Naive thymus-derived CD4-positive, alpha-beta T cell (primary cell): ENCODE measurements at regions of chr15 and their contacts with region 1.

Region 1: DNA sequence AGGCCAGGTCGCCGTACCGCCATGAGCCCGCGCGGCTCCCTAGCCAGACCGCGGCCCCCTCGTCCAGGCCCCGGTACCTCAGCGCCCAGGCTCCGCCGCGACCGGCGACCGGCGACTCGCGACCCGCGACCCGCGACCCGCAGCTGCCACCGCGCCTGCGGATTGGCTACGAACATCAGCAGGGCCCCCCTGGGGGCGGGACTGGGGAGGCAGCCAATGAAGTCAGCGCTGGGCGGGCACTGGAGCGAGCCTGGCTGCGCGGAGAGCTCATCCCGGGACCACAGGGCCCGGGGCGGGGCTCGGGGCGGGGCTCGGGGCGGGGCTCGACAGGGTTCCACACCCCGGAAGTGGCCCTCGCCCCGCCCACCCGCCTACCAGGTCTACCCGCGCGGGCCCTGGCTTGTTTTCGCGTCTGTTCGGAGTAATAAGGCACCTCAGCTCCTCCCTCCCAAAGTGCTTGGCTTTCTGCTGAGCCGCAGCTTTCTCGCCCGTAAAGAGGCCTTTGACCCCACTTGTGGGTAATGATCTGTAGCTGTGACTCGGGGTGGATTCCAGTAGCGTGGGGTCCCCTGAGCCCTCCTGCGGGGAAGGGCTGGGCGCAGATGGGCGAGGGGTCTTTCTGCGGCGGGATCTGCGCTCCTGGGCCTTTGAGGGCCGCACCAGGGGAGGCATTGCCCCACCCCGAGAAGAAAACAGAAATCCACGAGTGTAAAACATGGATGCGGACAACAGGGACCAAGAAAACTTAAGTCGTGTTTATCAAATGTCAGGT is at the start of gene LYSMD4:
- DNase-seq: peak; percentile 93 to 98 (median 96)
- ATAC-seq: peak; percentile 100
- H3K4me3 ChIP-seq: peak within 1 kb of the TSS; percentile 70
- H3K4me3 Mint-ChIP-seq: peak within 1 kb of the TSS; percentile 81 to 92 (median 88)
- H3K27ac ChIP-seq: peak within 1 kb of the TSS; percentile 84
- H3K27ac Mint-ChIP-seq: peak within 1 kb of the TSS; percentile 82 to 97 (median 95)
- H3K4me1 ChIP-seq: peaks cover 10 to 13% of the 10 kb centered on the region in 2 donors
- H3K4me1 Mint-ChIP-seq: peaks cover 5 to 36% (median 27%) of the 10 kb centered on the region in 7 donors
- H3K27me3 ChIP-seq: no peaks in the 10 kb centered on the region
- H3K27me3 Mint-ChIP-seq: no peaks in the 10 kb centered on the region
- total RNA-seq, gene LYSMD4: 7.9 to 22.4 (median 15.4) TPM

Region 2: DNA sequence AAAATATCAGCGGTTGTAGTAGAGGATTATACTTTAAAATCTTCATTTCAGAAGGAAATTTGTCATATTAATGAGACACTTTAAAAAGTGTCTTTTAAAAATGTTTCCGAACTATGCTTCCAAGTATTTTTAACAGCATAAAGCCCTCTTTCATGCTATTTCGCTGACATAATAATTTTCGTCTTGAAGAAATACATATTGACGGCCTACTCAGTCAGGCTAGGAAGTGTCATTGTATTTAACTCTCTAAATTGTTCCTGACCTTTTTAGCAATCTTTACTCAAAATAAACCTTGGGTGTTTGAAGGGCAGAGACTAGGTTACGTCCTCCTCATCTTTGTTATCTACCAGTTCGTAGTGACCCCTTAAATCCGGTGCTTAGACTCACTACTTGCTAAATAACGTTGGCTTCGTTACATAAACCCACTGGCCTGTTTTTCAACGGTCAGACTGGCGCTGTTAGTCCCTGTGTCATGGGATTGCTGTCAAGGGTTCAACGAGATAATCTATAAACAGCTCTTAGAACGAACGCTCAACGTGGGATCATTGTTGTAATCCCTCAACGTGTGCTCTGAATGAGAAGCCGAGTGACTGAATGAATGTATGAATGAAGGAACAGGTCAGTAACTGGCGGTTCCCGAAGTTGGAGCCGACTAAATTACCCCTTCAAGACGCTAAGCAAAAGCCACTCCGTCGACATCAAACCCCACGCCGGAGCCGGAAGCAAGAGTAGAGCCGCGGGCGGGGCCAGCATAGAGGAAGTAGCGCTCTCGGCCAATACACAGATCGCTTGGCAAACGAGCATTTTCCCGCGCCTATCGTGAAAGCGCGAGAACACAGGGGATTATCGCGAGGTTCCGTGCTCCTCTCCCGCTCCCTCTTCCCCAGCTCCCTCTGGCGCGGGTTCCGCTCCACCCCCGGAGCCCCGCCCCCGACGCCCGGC is 482.7 kb before region 1 on chr15:
- CTCF ChIA-PET with region 1: no interaction called
- POLR2A ChIA-PET with region 1: interaction called, 5 read pairs
- intact Hi-C with region 1: loop called (anchors 1 kb)
- DNase-seq: peak; percentile 78 to 95 (median 92)
- ATAC-seq: peak; percentile 96
- H3K4me3 ChIP-seq: peak overlapping the region; percentile 76
- H3K4me3 Mint-ChIP-seq: peak overlapping the region in 8 of 10 donors; percentile 81 to 95 (median 92)
- H3K27ac ChIP-seq: peak overlapping the region; percentile 65
- H3K27ac Mint-ChIP-seq: peak overlapping the region; percentile 83 to 92 (median 90)
- H3K4me1 ChIP-seq: peaks cover 14 to 28% of the 10 kb centered on the region in 2 donors
- H3K4me1 Mint-ChIP-seq: peaks cover 24 to 32% (median 27%) of the 10 kb centered on the region in 7 donors
- H3K27me3 ChIP-seq: no peaks in the 10 kb centered on the region
- H3K27me3 Mint-ChIP-seq: no peaks in the 10 kb centered on the region

Region 3: GRCh38 chr15:99282121-99282520 is 451.3 kb before region 1 on chr15:
- CTCF ChIA-PET with region 1: interaction called, 8 read pairs
- POLR2A ChIA-PET with region 1: interaction called, 5 read pairs
- intact Hi-C with region 1: loop called in 1 of 2 experiments (anchors 1 kb)
- DNase-seq: no peak
- ATAC-seq: no peak
- H3K4me3 ChIP-seq: no peak overlapping the region
- H3K4me3 Mint-ChIP-seq: no peak overlapping the region
- H3K27ac ChIP-seq: no peak overlapping the region
- H3K27ac Mint-ChIP-seq: no peak overlapping the region
- H3K4me1 ChIP-seq: no peaks in the 10 kb centered on the region
- H3K4me1 Mint-ChIP-seq: peaks cover 9 to 47% (median 19%) of the 10 kb centered on the region in 7 donors
- H3K27me3 ChIP-seq: no peaks in the 10 kb centered on the region
- H3K27me3 Mint-ChIP-seq: no peaks in the 10 kb centered on the region

Region 4: GRCh38 chr15:99409097-99409473 is 324.4 kb before region 1 on chr15:
- CTCF ChIA-PET with region 1: no interaction called
- POLR2A ChIA-PET with region 1: no interaction called
- intact Hi-C with region 1: loop called in 1 of 2 experiments (anchors 1 kb)
- DNase-seq: peak in 6 of 9 donors; percentile 24 to 57 (median 42)
- ATAC-seq: peak; percentile 71
- H3K4me3 ChIP-seq: no peak overlapping the region
- H3K4me3 Mint-ChIP-seq: peak overlapping the region in 3 of 10 donors; percentile 27 to 66 (median 28)
- H3K27ac ChIP-seq: no peak overlapping the region
- H3K27ac Mint-ChIP-seq: peak overlapping the region in 7 of 9 donors; percentile 18 to 91 (median 32)
- H3K4me1 ChIP-seq: peaks cover 0 to 17% of the 10 kb centered on the region in 2 donors
- H3K4me1 Mint-ChIP-seq: peaks cover 0 to 28% (median 22%) of the 10 kb centered on the region in 7 donors
- H3K27me3 ChIP-seq: no peaks in the 10 kb centered on the region
- H3K27me3 Mint-ChIP-seq: peaks cover 0 to 3% (median 0%) of the 10 kb centered on the region in 5 donors

Region 5: DNA sequence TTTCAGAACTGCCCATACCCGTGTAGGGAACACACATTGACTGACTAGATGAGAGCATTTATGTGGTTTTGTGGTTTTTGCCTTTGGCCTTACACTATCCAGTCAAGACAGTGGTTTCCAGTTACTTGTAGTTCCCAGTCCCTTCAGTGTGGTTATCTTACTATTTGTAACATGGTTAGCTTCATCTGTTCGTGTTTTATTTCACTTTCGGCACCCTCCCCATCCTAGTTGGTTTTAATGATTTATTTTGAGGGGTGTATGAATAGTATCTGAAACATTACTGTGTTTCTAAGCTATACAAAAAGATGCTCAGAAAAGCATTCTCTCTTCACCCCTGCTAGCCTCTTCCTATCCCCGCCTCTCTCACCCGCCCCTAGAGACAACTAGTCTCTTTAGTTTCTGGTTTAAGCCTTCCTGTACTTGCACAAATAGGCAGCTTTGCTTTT is 14.3 kb before region 1 on chr15:
- CTCF ChIA-PET with region 1: interaction called, 4 read pairs
- POLR2A ChIA-PET with region 1: interaction called, 13 read pairs
- intact Hi-C with region 1: loop called (anchors 1 kb)
- DNase-seq: no peak
- ATAC-seq: peak; percentile 21
- H3K4me3 ChIP-seq: no peak overlapping the region
- H3K4me3 Mint-ChIP-seq: peak overlapping the region in 4 of 10 donors; percentile 17 to 77 (median 48)
- H3K27ac ChIP-seq: no peak overlapping the region
- H3K27ac Mint-ChIP-seq: peak overlapping the region in 4 of 9 donors; percentile 10 to 90 (median 54)
- H3K4me1 ChIP-seq: peaks cover 7 to 25% of the 10 kb centered on the region in 2 donors
- H3K4me1 Mint-ChIP-seq: peaks cover 23 to 42% (median 34%) of the 10 kb centered on the region in 7 donors
- H3K27me3 ChIP-seq: no peaks in the 10 kb centered on the region
- H3K27me3 Mint-ChIP-seq: no peaks in the 10 kb centered on the region

Region 6: GRCh38 chr15:100602064-100602822 is 868.8 kb after region 1 on chr15 and contains the starts of genes ASB7 and LINS1:
- CTCF ChIA-PET with region 1: no interaction called
- POLR2A ChIA-PET with region 1: no interaction called
- intact Hi-C with region 1: loop called (anchors 2 kb)
- DNase-seq: peak; percentile 97 to 100 (median 100)
- ATAC-seq: peak; percentile 97
- H3K4me3 ChIP-seq: peak within 1 kb of the TSS; percentile 97
- H3K4me3 Mint-ChIP-seq: no peak within 1 kb of the TSS
- H3K27ac ChIP-seq: peak within 1 kb of the TSS; percentile 91
- H3K27ac Mint-ChIP-seq: peak within 1 kb of the TSS in 6 of 9 donors; percentile 50 to 95 (median 85)
- H3K4me1 ChIP-seq: peaks cover 35 to 52% of the 10 kb centered on the region in 2 donors
- H3K4me1 Mint-ChIP-seq: peaks cover 32 to 68% (median 41%) of the 10 kb centered on the region in 7 donors
- H3K27me3 ChIP-seq: no peaks in the 10 kb centered on the region
- H3K27me3 Mint-ChIP-seq: no peaks in the 10 kb centered on the region
- total RNA-seq, gene ASB7: 15.4 to 27.2 (median 18.9) TPM
- total RNA-seq, gene LINS1: 50.7 to 116 (median 76.9) TPM